H1 (cell line): ENCODE measurements at regions of chr5 and their contacts with region 1.

Region 1: GRCh38 chr5:45521067-45521466 is 175.1 kb downstream of the HCN1 start:
- DNase-seq: peak; percentile 15 to 78
- H3K4me3 ChIP-seq: no peak overlapping the region
- H3K27ac ChIP-seq: no peak overlapping the region
- H3K4me1 ChIP-seq: no peaks in the 10 kb centered on the region
- H3K27me3 ChIP-seq: no peaks in the 10 kb centered on the region
- CTCF ChIP-seq: peak in 2 of 3 experiments; percentile 74 to 82; a peak in 3 of 4 replicates
- EP300 ChIP-seq: no peak
- POLR2A ChIP-seq: no peak
- RAD21 ChIP-seq: peak; percentile 97

Region 2: GRCh38 chr5:44952376-44952775 is 568.7 kb before region 1 on chr5:
- CTCF ChIA-PET with region 1: interaction called, 11 read pairs
- POLR2A ChIA-PET with region 1: no interaction called
- DNase-seq: no peak
- H3K4me3 ChIP-seq: no peak overlapping the region
- H3K27ac ChIP-seq: no peak overlapping the region
- H3K4me1 ChIP-seq: no peaks in the 10 kb centered on the region
- H3K27me3 ChIP-seq: no peaks in the 10 kb centered on the region
- CTCF ChIP-seq: peak in 2 of 3 experiments; percentile 72 to 73; a peak in 3 of 4 replicates
- EP300 ChIP-seq: no peak
- POLR2A ChIP-seq: no peak
- RAD21 ChIP-seq: peak; percentile 76 to 79

Region 3: GRCh38 chr5:45038366-45038987 is 482.6 kb before region 1 on chr5:
- CTCF ChIA-PET with region 1: interaction called, 20 read pairs
- POLR2A ChIA-PET with region 1: no interaction called
- DNase-seq: no peak
- H3K4me3 ChIP-seq: no peak overlapping the region
- H3K27ac ChIP-seq: no peak overlapping the region
- H3K4me1 ChIP-seq: no peaks in the 10 kb centered on the region; a peak in 1 of 7 replicates
- H3K27me3 ChIP-seq: no peaks in the 10 kb centered on the region
- CTCF ChIP-seq: peak in 2 of 3 experiments; percentile 50 to 56; a peak in 2 of 4 replicates
- EP300 ChIP-seq: no peak
- POLR2A ChIP-seq: peak in 1 of 2 experiments; percentile 25; a peak in 1 of 3 replicates
- RAD21 ChIP-seq: peak; percentile 87 to 92